GM10248 (cell line): ENCODE measurements at regions of chr1 and their contacts with region 1.

Region 1: DNA sequence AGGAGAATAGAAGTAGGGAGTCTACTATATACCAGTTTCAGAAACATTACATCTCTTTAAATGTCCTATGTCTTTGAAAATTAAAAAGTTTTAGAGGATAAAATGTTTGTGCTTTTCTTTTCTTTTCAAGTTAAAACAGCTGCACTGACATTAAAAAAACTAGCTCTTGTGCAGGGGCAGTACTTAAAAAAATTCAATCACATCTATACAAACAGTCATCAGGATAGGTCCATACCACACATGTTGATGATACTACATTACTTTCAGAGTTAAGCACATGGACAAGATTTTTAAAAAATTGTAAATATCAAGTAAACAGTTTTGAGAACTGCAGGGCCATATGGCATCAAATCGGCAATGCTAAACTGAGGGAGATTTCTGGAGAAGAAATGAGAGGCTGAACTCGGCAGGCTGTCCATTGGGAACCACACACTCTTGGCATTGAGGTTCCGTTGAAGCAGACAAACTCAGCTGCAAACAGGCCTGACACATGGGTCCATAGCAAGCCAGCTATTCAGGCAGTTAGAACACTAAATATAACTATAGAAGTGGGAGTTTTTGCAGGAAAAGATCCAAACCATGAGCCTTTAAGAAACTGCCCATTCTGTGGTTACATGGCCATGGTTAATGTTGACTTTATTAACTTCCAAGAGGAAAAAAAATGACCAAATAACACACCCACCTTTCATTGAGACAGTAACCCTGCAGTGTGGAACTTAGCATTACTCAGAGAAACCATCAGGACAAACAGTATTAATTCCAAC is 84.5 kb upstream of the BCL10 start:
- DNase-seq: no peak
- CTCF ChIP-seq: no peak

Region 2: GRCh38 chr1:85376356-85376755 is 15.4 kb after region 1 on chr1:
- CTCF ChIA-PET with region 1: interaction called, 11 read pairs
- POLR2A ChIA-PET with region 1: no interaction called
- DNase-seq: no peak
- CTCF ChIP-seq: no peak